Adrenal gland (tissue), 19 donors: ENCODE measurements at regions of chr6 and their contacts with region 1.

Region 1: DNA sequence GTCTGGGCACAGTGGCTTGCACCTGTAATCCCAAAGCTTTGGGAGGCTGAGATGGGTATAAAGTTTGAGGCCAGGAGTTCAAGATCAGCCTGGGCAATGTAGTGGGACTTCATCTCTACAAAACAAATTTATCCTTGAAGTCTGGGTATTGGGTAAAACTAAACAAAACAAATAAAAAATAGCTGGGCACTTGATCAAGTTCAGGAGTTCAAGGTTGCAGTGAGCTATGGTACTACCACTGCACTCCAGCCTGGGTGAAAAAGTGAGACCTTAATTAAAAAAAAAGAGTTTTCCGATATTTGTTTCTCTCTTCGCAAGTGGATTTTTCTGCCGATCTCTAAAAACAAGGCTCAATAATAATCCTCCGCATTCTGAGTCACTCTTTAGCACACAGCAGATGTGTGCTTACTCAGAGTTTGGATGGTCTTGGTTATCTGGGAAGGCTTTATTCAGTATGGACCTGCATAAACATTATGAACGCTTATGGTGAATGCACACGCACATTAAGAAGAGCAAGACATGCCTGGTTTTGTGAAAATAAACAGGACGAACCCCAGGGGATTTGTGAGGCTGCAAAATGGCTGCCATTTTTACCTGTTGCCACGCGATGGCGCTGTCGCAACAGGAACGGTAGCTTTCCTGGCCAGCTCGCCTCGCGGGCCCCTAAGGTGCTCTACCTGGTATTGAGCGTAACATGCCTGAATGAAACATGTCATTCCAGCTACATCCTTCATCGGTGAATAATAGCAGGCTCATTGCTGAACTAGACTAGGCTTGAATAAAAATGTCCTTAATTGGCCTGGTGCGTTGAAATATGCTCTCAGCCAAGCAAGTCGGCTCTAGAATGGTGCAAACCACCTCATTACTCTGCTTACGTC is 6.0 kb downstream of the OPN5 start:
- DNase-seq: peak; percentile 32 to 76 (median 61)
- H3K4me3 ChIP-seq: no peak overlapping the region
- H3K27ac ChIP-seq: no peak overlapping the region
- H3K4me1 ChIP-seq: peaks cover 0 to 9% of the 10 kb centered on the region in 2 donors
- H3K27me3 ChIP-seq: peaks cover 4% of the 10 kb centered on the region
- CTCF ChIP-seq: peak; percentile 70 to 93 (median 87)
- POLR2A ChIP-seq: no peak

Region 2: GRCh38 chr6:48765352-48765961 is 977.6 kb after region 1 on chr6:
- intact Hi-C with region 1: loop called (anchors 10 kb)
- DNase-seq: peak; percentile 19 to 58 (median 32)
- H3K4me3 ChIP-seq: no peak overlapping the region
- H3K27ac ChIP-seq: no peak overlapping the region
- H3K4me1 ChIP-seq: no peaks in the 10 kb centered on the region
- H3K27me3 ChIP-seq: no peaks in the 10 kb centered on the region
- CTCF ChIP-seq: peak; percentile 24 to 53 (median 41)
- POLR2A ChIP-seq: no peak

Region 3: GRCh38 chr6:49409951-49410542 is 1622.2 kb after region 1 on chr6:
- intact Hi-C with region 1: loop called in 1 of 2 experiments (anchors 10 kb)
- DNase-seq: peak; percentile 47 to 93 (median 71)
- H3K4me3 ChIP-seq: no peak overlapping the region
- H3K27ac ChIP-seq: no peak overlapping the region
- H3K4me1 ChIP-seq: no peaks in the 10 kb centered on the region
- H3K27me3 ChIP-seq: no peaks in the 10 kb centered on the region
- CTCF ChIP-seq: peak; percentile 46 to 82 (median 66)
- POLR2A ChIP-seq: no peak